PC-3 (cell line): ENCODE measurements at regions of chr12 and their contacts with region 1.

Region 1: GRCh38 chr12:85836197-85837090 is at the start of gene RASSF9:
- DNase-seq: peak; percentile 53
- ATAC-seq: peak; percentile 70
- H3K4me3 ChIP-seq: peak within 1 kb of the TSS; percentile 70
- H3K27ac ChIP-seq: peak within 1 kb of the TSS; percentile 26
- H3K4me1 ChIP-seq: peaks cover 30% of the 10 kb centered on the region
- H3K27me3 ChIP-seq: no peaks in the 10 kb centered on the region
- CTCF ChIP-seq: no peak
- total RNA-seq, gene RASSF9: 0.17 TPM in 1 of 2 replicates, not detected in the other

Region 2: GRCh38 chr12:85653731-85654455 is 182.6 kb before region 1 on chr12:
- CTCF ChIA-PET with region 1: no interaction called
- POLR2A ChIA-PET with region 1: interaction called, 10 read pairs
- intact Hi-C with region 1: no loop called
- DNase-seq: no peak
- ATAC-seq: no peak
- H3K4me3 ChIP-seq: no peak overlapping the region
- H3K27ac ChIP-seq: no peak overlapping the region
- H3K4me1 ChIP-seq: no peaks in the 10 kb centered on the region
- H3K27me3 ChIP-seq: no peaks in the 10 kb centered on the region
- CTCF ChIP-seq: no peak

Region 3: DNA sequence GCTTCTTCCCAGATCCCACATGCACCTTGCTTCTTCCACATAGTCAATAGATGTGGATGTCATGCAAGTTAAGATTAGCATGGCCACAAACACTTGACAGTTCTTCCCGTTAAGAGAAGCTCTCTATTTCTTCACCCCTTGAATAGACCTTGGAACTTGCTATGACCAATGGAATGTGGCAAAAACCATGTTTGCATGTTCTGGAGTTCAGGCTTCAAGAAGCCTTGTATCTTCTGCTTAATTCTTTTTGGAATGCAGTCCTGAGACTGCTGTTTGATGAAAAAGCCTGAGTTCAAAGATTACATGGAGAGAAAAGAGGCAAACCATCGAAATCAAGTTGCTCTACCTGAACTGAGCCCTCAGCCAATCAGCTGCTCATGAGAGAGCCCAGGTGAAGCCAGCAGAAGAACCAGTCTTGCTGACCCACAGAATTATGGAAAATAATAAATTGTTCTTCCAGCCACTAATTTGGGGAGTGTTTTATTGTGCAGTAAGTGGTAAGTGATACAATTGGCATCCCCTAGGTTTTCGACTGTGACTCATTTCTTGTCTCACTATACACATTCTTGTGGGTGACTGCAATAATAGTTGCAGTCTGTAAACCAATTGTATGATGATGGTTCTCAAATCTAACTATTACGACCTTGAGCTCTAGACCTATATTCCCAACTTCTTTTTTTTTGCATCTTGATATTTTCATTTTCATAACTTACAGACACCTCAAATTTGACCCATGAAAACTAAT is 12.8 kb before region 1 on chr12:
- CTCF ChIA-PET with region 1: interaction called, 10 read pairs
- POLR2A ChIA-PET with region 1: no interaction called
- intact Hi-C with region 1: loop called (anchors 2 kb)
- DNase-seq: peak; percentile 72
- ATAC-seq: peak; percentile 79
- H3K4me3 ChIP-seq: no peak overlapping the region
- H3K27ac ChIP-seq: no peak overlapping the region
- H3K4me1 ChIP-seq: peaks cover 23% of the 10 kb centered on the region
- H3K27me3 ChIP-seq: no peaks in the 10 kb centered on the region
- CTCF ChIP-seq: no peak

Region 4: DNA sequence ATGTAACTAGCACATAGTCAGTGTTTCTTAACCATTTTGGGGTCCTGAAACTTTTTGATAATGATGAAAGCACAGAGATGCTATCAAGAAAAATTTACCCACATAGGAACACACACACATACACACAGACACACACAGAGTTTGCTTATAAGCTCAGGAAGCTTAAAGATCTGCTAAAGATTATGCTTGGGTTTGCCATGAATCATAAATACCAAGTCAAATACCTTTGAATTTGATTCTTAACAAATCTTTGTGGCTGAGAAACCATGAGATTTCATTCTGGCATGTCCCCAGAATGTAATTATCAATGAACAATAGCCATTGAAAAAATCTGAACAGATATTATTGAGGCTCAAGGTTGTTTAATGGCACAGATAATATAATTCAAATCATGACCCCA is 126.9 kb after region 1 on chr12:
- CTCF ChIA-PET with region 1: no interaction called
- POLR2A ChIA-PET with region 1: no interaction called
- intact Hi-C with region 1: no loop called
- DNase-seq: no peak
- ATAC-seq: no peak
- H3K4me3 ChIP-seq: no peak overlapping the region
- H3K27ac ChIP-seq: no peak overlapping the region
- H3K4me1 ChIP-seq: no peaks in the 10 kb centered on the region
- H3K27me3 ChIP-seq: no peaks in the 10 kb centered on the region
- CTCF ChIP-seq: no peak